ENCODE measurements at regions of chr11 and their contacts with region 1.

Region 1: GRCh38 chr11:119334174-119334930 is at the start of gene RNF26:
- DNase-seq: peak; percentile 99
- H3K4me3 ChIP-seq: peak within 1 kb of the TSS; percentile 77
- H3K4me3 Mint-ChIP-seq: peak within 1 kb of the TSS; percentile 82
- H3K27ac Mint-ChIP-seq: peak within 1 kb of the TSS; percentile 99
- H3K4me1 ChIP-seq: peaks cover 28% of the 10 kb centered on the region
- H3K4me1 Mint-ChIP-seq: peaks cover 29% of the 10 kb centered on the region
- H3K27me3 ChIP-seq: no peaks in the 10 kb centered on the region; the same call in 1 of the 2 replicates
- H3K27me3 Mint-ChIP-seq: peaks cover 4% of the 10 kb centered on the region
- CTCF ChIP-seq: no peak
- total RNA-seq, gene RNF26: 85.8 and 92.7 TPM in 2 replicates

Region 2: DNA sequence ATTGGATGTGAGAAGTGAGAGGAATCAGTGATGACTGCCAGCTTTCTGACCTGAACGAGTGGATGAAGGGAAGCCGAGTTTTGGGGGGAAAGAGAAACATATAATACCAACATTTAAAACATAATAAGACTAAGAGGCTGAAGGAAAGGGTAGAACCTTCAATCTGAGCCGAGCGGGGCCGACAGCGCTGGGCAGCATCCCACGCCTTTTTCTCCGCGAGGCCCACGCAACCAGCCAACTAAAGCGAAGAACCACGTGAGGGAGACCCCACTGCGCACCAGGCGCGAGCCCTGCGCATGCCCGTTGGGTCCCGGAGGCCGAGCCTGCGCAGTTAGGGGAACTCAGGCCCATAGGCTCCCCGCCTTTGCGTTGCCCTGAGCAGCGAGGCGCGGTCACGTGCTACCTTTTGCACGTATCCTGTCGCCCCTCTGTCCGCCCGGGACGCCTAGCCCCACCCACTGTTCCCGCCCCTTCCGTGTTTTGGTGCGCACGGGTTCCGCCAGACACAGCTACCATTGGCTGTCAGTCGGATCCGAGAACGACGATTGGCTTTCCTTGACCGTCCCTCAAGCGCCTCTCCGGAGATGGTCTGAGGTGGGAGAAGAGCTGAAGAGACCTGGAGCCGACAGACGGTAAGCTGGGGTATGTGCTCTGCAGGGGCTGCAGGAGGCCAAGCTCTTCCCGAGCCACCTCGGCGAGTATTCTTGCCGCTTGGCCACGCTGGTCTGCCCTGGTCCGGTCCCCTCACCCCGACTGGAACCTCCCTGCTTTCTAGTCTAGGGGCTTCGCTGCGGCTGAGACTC is 213.1 kb before region 1 on chr11 and contains the start of gene HINFP:
- CTCF ChIA-PET with region 1: interaction called, 19 read pairs
- POLR2A ChIA-PET with region 1: no interaction called
- intact Hi-C with region 1: no loop called
- DNase-seq: peak; percentile 100
- H3K4me3 ChIP-seq: peak within 1 kb of the TSS; percentile 84
- H3K4me3 Mint-ChIP-seq: peak within 1 kb of the TSS; percentile 88
- H3K27ac Mint-ChIP-seq: peak within 1 kb of the TSS; percentile 90
- H3K4me1 ChIP-seq: peaks cover 18% of the 10 kb centered on the region
- H3K4me1 Mint-ChIP-seq: peaks cover 18% of the 10 kb centered on the region
- H3K27me3 ChIP-seq: no peaks in the 10 kb centered on the region
- H3K27me3 Mint-ChIP-seq: no peaks in the 10 kb centered on the region
- CTCF ChIP-seq: no peak
- total RNA-seq, gene HINFP: 61.6 and 65.2 TPM in 2 replicates

Region 3: DNA sequence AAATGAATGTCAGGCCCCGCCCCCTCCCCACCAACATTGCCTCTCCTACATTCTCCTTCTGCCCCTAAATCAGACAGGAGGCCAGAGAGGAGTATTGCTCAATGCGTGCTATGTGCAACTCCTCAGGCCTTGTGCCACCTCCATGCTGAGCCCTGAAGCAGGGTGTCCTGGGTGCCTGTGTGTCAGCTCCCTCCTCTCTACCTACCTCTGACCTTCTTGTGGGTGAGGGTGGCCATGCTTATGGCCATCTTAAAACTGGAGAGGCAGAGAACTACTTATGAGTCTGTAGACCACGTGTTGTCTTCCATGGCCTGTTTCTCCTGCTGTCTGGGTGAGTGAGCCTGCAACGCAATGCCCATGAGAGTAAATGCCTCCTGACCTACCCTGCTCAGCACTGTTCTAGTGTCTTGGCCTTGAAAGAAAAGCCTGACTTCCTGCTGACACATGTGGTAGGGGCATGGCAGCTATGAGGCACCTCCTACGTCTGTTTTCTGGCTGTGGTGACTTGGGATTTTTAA is 27.9 kb before region 1 on chr11:
- CTCF ChIA-PET with region 1: interaction called, 14 read pairs
- POLR2A ChIA-PET with region 1: interaction called, 3 read pairs
- intact Hi-C with region 1: no loop called
- DNase-seq: no peak
- H3K4me3 ChIP-seq: no peak overlapping the region
- H3K4me3 Mint-ChIP-seq: no peak overlapping the region
- H3K27ac Mint-ChIP-seq: no peak overlapping the region
- H3K4me1 ChIP-seq: no peaks in the 10 kb centered on the region
- H3K4me1 Mint-ChIP-seq: no peaks in the 10 kb centered on the region
- H3K27me3 ChIP-seq: no peaks in the 10 kb centered on the region
- H3K27me3 Mint-ChIP-seq: no peaks in the 10 kb centered on the region
- CTCF ChIP-seq: no peak

Region 4: GRCh38 chr11:119347242-119347641 is 12.9 kb after region 1 on chr11:
- CTCF ChIA-PET with region 1: interaction called, 15 read pairs
- POLR2A ChIA-PET with region 1: interaction called, 3 read pairs
- intact Hi-C with region 1: no loop called
- DNase-seq: no peak
- H3K4me3 ChIP-seq: no peak overlapping the region
- H3K4me3 Mint-ChIP-seq: no peak overlapping the region
- H3K27ac Mint-ChIP-seq: no peak overlapping the region
- H3K4me1 ChIP-seq: no peaks in the 10 kb centered on the region; the same call in 1 of the 2 replicates
- H3K4me1 Mint-ChIP-seq: no peaks in the 10 kb centered on the region
- H3K27me3 ChIP-seq: no peaks in the 10 kb centered on the region
- H3K27me3 Mint-ChIP-seq: peaks cover 3% of the 10 kb centered on the region
- CTCF ChIP-seq: no peak

Region 5: GRCh38 chr11:119363851-119364590 is 29.7 kb after region 1 on chr11:
- CTCF ChIA-PET with region 1: interaction called, 220 read pairs
- POLR2A ChIA-PET with region 1: interaction called, 15 read pairs
- intact Hi-C with region 1: loop called (anchors 1 kb)
- DNase-seq: peak in 1 of 2 experiments; percentile 92
- H3K4me3 ChIP-seq: peak overlapping the region; percentile 64
- H3K4me3 Mint-ChIP-seq: peak overlapping the region; percentile 77
- H3K27ac Mint-ChIP-seq: peak overlapping the region; percentile 67
- H3K4me1 ChIP-seq: peaks cover 75% of the 10 kb centered on the region
- H3K4me1 Mint-ChIP-seq: peaks cover 68% of the 10 kb centered on the region
- H3K27me3 ChIP-seq: no peaks in the 10 kb centered on the region
- H3K27me3 Mint-ChIP-seq: no peaks in the 10 kb centered on the region
- CTCF ChIP-seq: no peak

Region 6: DNA sequence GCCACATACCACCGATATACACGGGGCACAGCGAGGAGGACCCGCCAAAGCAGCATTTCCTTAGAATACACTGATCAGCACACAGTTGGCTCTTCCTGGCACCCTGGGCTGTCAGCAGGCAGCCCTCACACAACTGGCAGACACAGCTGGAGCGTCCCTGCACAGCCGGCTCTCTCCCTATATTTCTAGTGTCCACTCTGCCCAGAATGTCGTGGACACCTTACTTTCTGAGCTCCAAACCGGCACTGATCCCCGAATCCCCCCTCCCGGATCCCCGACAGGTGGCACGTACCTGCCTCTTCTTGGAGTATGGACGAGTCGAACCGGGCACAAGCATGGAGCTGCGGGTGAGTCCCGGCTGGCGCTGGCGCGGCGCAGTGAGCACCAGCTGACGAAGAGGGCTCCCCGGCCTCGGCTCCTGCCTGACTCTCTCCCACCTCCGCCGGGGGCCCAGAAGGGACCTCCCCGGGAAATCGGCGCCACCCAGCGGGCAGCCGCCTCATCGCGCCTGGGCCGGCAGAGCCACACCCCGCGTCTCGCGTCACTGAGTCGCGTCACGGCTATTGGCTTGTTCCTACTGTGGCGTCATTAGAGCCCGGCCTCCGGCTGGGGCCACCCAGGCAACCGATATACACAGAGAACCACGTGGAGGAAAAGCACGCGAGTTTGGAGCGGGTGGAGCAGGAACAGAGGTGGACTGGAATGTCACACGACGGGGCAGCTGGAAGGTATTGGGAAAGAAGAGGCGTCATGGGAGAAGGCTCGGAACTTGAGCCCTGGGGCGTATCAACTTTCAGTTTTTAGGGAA is 47.0 kb after region 1 on chr11 and contains the start of gene USP2:
- CTCF ChIA-PET with region 1: interaction called, 220 read pairs
- POLR2A ChIA-PET with region 1: interaction called, 10 read pairs
- intact Hi-C with region 1: no loop called
- DNase-seq: peak; percentile 99 to 100
- H3K4me3 ChIP-seq: peak within 1 kb of the TSS; percentile 46
- H3K4me3 Mint-ChIP-seq: no peak within 1 kb of the TSS
- H3K27ac Mint-ChIP-seq: no peak within 1 kb of the TSS
- H3K4me1 ChIP-seq: peaks cover 14% of the 10 kb centered on the region
- H3K4me1 Mint-ChIP-seq: peaks cover 14% of the 10 kb centered on the region
- H3K27me3 ChIP-seq: no peaks in the 10 kb centered on the region; the same call in 1 of the 2 replicates
- H3K27me3 Mint-ChIP-seq: peaks cover 3% of the 10 kb centered on the region
- CTCF ChIP-seq: peak; percentile 97 to 99
- total RNA-seq, gene USP2: 13.9 and 14.4 TPM in 2 replicates

Region 7: DNA sequence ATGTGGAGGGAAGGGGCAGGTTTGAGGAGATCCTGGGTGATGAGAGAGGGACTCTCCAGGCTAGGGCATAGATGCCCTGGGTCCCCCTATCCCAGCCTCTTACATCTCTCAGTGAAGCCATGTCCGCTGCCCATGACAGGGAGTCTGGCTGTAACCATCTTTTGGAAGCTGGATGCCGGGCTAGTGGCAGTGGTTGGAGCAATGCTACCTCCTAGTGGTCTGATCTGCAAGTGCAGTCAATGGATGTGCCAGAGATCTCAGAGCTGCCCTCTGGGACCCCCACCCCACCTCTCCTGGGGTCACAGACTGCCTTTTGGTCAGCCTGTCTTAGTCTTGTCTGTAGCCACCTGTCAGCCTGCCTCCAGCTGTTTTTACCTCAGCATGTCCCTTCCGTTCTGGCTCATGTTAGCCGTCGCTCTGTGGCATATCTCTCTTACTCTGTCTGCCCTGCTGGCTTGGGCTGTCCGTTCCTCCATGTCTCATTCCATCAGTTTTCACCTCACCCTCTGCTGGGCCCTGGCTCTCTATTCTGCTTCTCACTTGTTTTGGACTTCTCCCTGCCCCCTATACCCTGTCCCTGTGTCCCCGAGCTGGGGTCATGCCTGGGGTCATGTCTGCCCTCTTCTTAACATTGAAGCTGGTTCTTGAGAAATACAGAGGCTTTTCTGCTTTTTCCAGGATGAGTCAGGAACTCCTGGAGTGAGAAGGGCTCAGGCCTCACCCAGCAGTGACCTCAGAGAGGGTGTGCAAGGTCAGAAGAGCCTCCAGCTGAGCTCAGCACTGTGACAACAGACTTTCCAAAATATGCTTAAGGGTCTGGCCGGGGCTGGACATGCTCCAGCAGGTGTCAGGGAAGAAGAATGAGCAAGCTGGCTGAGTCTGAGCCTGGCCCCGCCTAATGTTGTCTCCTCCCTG is 140.6 kb after region 1 on chr11:
- CTCF ChIA-PET with region 1: interaction called, 14 read pairs
- POLR2A ChIA-PET with region 1: no interaction called
- intact Hi-C with region 1: no loop called
- DNase-seq: peak; percentile 65 to 79
- H3K4me3 ChIP-seq: no peak overlapping the region
- H3K4me3 Mint-ChIP-seq: no peak overlapping the region
- H3K27ac Mint-ChIP-seq: no peak overlapping the region
- H3K4me1 ChIP-seq: no peaks in the 10 kb centered on the region
- H3K4me1 Mint-ChIP-seq: no peaks in the 10 kb centered on the region
- H3K27me3 ChIP-seq: no peaks in the 10 kb centered on the region; the same call in 1 of the 2 replicates
- H3K27me3 Mint-ChIP-seq: peaks cover 11% of the 10 kb centered on the region
- CTCF ChIP-seq: peak; percentile 92 to 97

Measured in Caco-2 (cell line).